Adrenal gland (tissue), 19 donors: ENCODE measurements at regions of chr18 and their contacts with region 1.

Region 1: GRCh38 chr18:50356036-50356945 is 18.6 kb upstream of the SKA1 start:
- DNase-seq: peak in 6 of 7 donors; percentile 24 to 66 (median 54)
- H3K4me3 ChIP-seq: no peak overlapping the region
- H3K27ac ChIP-seq: peak overlapping the region in 1 of 5 donors; percentile 25
- H3K4me1 ChIP-seq: no peaks in the 10 kb centered on the region
- H3K27me3 ChIP-seq: no peaks in the 10 kb centered on the region
- CTCF ChIP-seq: no peak
- POLR2A ChIP-seq: no peak

Region 2: DNA sequence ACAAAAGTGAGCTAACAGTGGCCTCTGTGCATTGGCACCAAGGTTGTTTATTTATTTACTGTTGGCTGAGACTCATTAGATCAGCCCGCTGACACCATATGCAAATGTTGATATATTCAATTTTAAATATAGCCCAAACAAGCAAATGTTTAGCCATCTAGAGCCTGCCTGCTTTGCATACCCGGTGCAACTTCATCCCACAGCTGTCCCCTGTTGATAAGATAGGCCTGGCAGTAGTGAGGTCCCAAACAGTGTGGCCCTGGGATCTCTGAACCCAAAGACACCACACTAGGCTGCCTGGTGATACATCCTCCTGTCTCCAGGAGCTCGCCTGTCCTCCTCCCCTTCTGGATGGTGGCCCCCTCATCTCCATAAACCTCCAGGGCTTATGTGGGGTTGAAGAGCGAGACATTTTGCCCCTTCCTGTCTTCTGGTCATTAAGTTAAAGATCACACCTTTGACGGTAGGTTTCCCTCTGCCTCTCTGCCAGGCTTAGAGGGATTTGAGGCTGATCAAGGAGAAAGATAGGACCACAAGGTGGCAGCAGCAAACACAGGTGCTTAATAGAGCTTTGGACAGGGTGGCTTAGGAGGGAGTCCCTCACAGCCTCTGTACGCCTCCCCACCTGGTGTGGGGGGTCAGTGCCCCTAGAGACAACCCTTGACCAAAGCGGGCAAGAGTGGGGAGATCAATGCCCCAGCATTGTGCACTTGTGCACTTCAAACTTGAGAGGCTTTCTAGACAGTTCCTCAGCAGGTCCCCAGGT is 137.7 kb before region 1 on chr18:
- intact Hi-C with region 1: loop called in 1 of 2 experiments (anchors 5 kb)
- DNase-seq: peak in 3 of 7 donors; percentile 24 to 54 (median 50)
- H3K4me3 ChIP-seq: no peak overlapping the region
- H3K27ac ChIP-seq: no peak overlapping the region
- H3K4me1 ChIP-seq: no peaks in the 10 kb centered on the region
- H3K27me3 ChIP-seq: peaks cover 3% of the 10 kb centered on the region
- CTCF ChIP-seq: peak in 5 of 6 experiments; percentile 8 to 47 (median 40)
- POLR2A ChIP-seq: no peak

Region 3: GRCh38 chr18:50277935-50278334 is 78.4 kb before region 1 on chr18:
- intact Hi-C with region 1: loop called in 1 of 2 experiments (anchors 10 kb)
- DNase-seq: no peak
- H3K4me3 ChIP-seq: no peak overlapping the region
- H3K27ac ChIP-seq: no peak overlapping the region
- H3K4me1 ChIP-seq: peaks cover 23 to 33% of the 10 kb centered on the region in 2 donors
- H3K27me3 ChIP-seq: no peaks in the 10 kb centered on the region
- CTCF ChIP-seq: no peak
- POLR2A ChIP-seq: no peak

Region 4: DNA sequence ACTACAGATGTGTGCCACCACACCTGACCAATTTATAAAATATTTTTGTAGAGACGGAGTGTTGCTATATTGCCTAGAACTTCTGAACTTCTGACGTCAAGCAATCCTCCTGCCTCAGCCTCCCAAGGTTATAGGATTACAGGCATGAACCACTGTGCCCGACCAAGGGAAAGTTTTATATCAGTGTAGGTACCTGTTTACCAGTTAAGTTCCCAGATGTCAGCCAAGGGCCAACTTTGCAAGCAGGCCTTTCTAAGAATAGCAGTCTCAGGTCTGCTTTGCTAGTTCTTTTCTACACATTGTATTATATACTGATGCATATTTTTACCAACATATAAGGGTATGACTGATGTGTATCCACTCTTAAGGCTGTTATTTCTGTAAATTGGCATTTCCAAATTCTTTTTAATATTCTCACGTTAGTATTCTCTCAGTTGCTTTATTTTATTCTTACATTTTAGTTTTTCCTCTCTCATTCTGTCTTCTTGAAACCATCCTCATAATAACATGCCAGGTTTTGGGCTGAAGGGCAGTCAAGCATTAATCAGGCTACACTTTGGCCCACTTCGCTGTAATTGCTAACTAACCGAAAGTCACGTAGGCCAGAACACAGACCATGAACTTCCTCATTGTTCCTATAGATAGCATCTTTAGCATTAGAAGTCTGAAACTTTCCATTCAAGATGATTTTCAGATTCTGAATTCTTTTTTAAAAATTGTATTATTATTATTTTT is 43.8 kb before region 1 on chr18:
- intact Hi-C with region 1: loop called in 1 of 2 experiments (anchors 10 kb)
- DNase-seq: no peak
- H3K4me3 ChIP-seq: no peak overlapping the region
- H3K27ac ChIP-seq: no peak overlapping the region
- H3K4me1 ChIP-seq: peaks cover 3 to 9% of the 10 kb centered on the region in 2 donors
- H3K27me3 ChIP-seq: peaks cover 5% of the 10 kb centered on the region
- CTCF ChIP-seq: no peak
- POLR2A ChIP-seq: no peak